Heart right ventricle (tissue), 16 donors: ENCODE measurements at regions of chr21 and their contacts with region 1.

Region 1: DNA sequence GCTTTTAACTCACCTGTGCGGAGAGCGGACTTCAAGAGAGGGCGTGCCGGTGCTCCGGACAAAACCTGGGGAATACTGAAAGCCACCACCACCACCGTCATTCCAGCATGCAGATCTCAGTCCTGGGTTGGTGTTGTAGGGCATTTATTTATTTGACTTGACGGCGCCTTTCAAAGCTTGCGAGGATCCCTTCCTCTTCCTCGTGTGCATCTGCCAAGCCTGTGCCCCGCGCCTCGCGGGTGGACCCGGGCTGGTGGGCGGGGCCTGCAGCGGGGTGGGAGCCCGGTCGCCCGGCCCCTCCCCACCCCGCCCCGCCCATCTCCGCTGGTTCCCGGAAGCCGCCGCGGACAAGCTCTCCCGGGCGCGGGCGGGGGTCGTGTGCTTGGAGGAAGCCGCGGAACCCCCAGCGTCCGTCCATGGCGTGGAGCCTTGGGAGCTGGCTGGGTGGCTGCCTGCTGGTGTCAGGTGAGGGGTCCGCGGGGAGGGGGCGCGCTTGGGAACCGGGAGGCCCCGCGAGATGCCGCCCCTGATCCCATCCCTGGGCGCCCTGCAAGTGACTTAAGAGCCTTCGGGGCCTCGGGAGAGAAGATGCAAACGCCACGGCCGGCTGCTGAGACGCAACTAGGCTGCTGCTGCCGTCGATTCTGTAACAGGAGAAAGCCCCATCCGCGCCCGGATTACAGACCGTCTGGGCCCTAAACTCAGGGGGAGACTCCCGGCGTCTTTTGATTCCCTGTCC is at the start of gene IL10RB:
- DNase-seq: peak; percentile 71 to 81
- ATAC-seq: peak; percentile 93 to 97 (median 94)
- H3K4me3 ChIP-seq: peak within 1 kb of the TSS; percentile 54 to 96 (median 83)
- H3K27ac ChIP-seq: peak within 1 kb of the TSS; percentile 18 to 98 (median 86)
- H3K4me1 ChIP-seq: peaks cover 0 to 66% (median 18%) of the 10 kb centered on the region in 9 donors
- H3K27me3 ChIP-seq: no peaks in the 10 kb centered on the region
- CTCF ChIP-seq: peak in 1 of 9 donors; percentile 11
- total RNA-seq, gene IL10RB: 4.1 to 16.8 (median 6.9) TPM

Region 2: GRCh38 chr21:32978341-32979270 is 287.6 kb before region 1 on chr21:
- intact Hi-C with region 1: no loop called
- DNase-seq: no peak
- ATAC-seq: no peak
- H3K4me3 ChIP-seq: no peak overlapping the region
- H3K27ac ChIP-seq: no peak overlapping the region
- H3K4me1 ChIP-seq: no peaks in the 10 kb centered on the region
- H3K27me3 ChIP-seq: peaks cover 0 to 59% (median 16%) of the 10 kb centered on the region in 7 donors
- CTCF ChIP-seq: no peak

Region 3: DNA sequence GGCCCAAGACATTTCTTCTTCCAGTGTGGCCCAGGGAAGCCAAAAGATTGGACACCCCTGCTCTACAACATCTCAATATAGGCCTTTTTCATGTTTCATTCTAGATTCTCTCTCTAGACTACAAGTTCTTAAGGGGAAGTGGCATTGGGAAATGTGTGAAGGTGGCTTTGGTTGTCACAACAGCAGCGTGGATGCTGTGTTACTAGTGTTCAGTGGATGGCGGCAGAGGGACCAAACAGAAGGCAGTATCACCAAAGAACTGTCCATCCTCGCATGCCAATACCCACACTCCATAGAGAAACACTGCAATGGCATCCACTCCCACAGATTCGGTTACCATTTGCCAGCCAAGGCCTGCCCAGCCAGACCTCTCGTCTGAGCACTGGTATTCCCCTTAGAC is 60.7 kb before region 1 on chr21:
- intact Hi-C with region 1: loop called in 1 of 10 experiments (anchors 5 kb)
- DNase-seq: no peak
- ATAC-seq: no peak
- H3K4me3 ChIP-seq: no peak overlapping the region
- H3K27ac ChIP-seq: peak overlapping the region in 1 of 10 donors; percentile 82
- H3K4me1 ChIP-seq: peaks cover 0 to 52% (median 0%) of the 10 kb centered on the region in 9 donors
- H3K27me3 ChIP-seq: no peaks in the 10 kb centered on the region
- CTCF ChIP-seq: peak in 1 of 9 donors; percentile 25

Region 4: DNA sequence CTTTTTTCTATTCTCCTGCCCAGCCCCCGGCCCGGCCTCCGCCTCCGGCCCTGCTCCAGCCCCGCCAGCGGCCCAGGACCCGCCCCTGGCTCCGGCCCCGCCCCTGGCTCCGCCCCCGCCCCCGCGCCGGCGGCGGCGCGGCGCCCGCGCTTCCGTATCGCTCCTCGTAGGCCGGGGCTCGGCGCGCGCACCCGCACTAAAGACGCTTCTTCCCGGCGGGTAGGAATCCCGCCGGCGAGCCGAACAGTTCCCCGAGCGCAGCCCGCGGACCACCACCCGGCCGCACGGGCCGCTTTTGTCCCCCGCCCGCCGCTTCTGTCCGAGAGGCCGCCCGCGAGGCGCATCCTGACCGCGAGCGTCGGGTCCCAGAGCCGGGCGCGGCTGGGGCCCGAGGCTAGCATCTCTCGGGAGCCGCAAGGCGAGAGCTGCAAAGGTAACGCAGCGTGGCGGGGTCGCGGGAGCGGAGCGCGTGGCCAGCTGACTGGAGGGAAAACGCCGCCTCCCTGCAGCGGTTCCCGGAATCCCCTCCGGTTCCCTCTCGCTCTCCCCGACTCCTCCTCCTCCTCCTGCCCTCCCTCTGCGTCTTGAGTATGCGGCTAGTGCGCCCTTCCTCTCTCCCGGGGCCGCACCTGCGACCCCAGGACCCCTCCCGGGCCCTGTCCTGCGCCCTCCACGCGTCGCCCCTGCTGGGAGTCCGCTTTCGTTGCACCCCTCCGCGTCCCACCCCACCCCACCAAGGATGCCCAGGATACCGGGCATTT is 36.3 kb before region 1 on chr21 and contains the start of gene IFNAR2:
- intact Hi-C with region 1: loop called in 1 of 10 experiments (anchors 1 kb)
- DNase-seq: peak; percentile 79 to 85
- ATAC-seq: peak; percentile 83 to 98 (median 94)
- H3K4me3 ChIP-seq: peak within 1 kb of the TSS; percentile 78 to 100 (median 96)
- H3K27ac ChIP-seq: peak within 1 kb of the TSS; percentile 91 to 100 (median 99)
- H3K4me1 ChIP-seq: peaks cover 5 to 56% (median 36%) of the 10 kb centered on the region in 9 donors
- H3K27me3 ChIP-seq: no peaks in the 10 kb centered on the region
- CTCF ChIP-seq: peak in 2 of 9 donors; percentile 3 to 6
- total RNA-seq, gene IFNAR2: 6.7 to 22.9 (median 10.4) TPM

Region 5: DNA sequence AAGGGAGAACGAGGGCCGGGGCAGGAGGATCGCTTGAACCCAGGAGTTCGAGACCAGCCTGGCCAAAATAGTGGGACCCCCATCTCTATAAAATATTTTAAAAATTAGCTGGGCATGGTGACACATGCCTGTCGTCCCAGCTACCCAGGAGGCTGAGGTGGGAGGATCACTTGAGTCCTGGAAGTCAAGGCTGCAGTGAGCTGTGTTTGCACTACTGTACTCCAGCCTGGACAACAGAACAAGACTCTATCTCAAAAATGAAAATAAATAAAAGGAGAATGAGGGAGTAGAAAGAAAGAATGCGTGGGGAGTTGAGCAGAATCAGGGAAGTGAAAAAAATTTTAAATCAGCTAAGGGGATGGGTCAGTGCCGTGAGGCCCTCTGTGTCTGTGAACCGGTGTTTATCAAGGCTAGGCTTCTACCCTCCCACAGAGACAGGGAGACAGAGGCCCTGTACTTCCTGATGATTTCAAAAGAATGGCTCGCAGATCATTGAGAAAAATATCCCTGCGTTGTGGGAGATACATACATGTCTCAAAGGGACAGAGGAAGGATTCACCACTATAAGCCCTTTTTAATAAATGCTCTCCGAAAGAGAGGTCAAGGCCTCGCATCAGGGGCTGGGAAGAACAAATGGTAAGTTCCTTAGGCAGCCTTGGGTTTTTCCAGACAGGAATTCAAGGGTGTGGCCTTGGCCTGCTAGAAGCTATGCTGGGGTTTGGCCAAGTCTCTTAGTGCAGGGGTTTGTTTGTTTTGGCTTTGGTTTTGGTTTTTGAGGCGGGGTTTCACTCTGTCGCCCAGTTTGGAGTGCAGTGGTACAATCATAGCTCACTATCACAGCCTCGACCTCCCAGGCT is 20.6 kb after region 1 on chr21:
- intact Hi-C with region 1: loop called in 1 of 10 experiments (anchors 2 kb)
- DNase-seq: peak in 1 of 2 donors; percentile 80
- ATAC-seq: peak; percentile 79 to 92 (median 86)
- H3K4me3 ChIP-seq: no peak overlapping the region
- H3K27ac ChIP-seq: peak overlapping the region; percentile 37 to 92 (median 75)
- H3K4me1 ChIP-seq: peaks cover 8 to 54% (median 33%) of the 10 kb centered on the region in 9 donors
- H3K27me3 ChIP-seq: no peaks in the 10 kb centered on the region
- CTCF ChIP-seq: no peak

Region 6: DNA sequence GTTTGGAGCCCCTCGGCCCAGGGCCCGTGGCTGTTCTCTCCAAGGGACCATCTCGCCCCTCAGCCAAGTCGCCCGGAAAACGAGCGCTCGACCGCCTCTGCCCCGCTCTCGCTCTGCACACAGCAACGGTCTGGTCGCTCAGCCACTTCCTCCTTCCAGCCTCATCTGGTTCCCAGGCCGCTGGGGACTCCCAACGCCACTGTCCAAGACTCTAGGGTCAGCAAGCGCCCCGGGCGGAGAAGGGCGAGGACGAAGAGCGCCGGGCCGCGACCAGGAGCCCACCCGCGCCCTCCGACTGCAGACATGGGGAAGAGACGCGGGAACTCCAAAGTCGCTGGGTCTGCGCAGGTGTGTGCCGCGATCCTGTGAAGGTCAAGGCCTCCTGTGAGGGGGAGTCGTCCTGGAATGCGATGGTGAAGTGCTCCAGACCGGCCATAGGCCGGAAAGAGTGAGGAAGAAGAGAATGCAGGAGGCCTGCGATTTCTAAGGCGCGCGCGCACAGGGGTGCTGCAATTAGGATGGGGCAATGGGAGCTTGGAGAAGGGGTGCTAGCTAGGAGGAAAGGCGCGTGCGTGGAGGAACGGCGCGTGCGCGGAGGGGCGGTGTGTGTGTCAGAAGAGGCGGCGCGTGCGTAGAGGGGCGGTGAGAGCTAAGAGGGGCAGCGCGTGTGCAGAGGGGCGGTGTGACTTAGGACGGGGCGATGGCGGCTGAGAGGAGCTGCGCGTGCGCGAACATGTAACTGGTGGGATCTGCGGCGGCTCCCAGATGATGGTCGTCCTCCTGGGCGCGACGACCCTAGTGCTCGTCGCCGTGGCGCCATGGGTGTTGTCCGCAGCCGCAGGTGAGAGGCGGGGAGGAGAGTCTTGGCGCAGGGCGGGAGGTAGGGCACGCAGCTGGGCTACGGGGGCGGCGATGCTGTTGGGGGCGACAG is 58.3 kb after region 1 on chr21 and contains the start of gene IFNAR1:
- intact Hi-C with region 1: loop called in 1 of 10 experiments (anchors 10 kb)
- DNase-seq: peak; percentile 98 to 99
- ATAC-seq: peak; percentile 98 to 100 (median 99)
- H3K4me3 ChIP-seq: peak within 1 kb of the TSS; percentile 67 to 99 (median 93)
- H3K27ac ChIP-seq: peak within 1 kb of the TSS; percentile 92 to 100 (median 99)
- H3K4me1 ChIP-seq: peaks cover 2 to 49% (median 36%) of the 10 kb centered on the region in 9 donors
- H3K27me3 ChIP-seq: no peaks in the 10 kb centered on the region
- CTCF ChIP-seq: no peak
- total RNA-seq, gene IFNAR1: 16.5 to 38.5 (median 23.9) TPM

Region 7: GRCh38 chr21:33552093-33552998 is 286.1 kb after region 1 on chr21:
- intact Hi-C with region 1: no loop called
- DNase-seq: no peak
- ATAC-seq: peak in 6 of 8 donors; percentile 7 to 34 (median 26)
- H3K4me3 ChIP-seq: no peak overlapping the region
- H3K27ac ChIP-seq: no peak overlapping the region
- H3K4me1 ChIP-seq: peaks cover 4 to 46% (median 21%) of the 10 kb centered on the region in 9 donors
- H3K27me3 ChIP-seq: no peaks in the 10 kb centered on the region
- CTCF ChIP-seq: no peak